ENCODE measurements at regions of chr7 and their contacts with region 1.

Region 1: DNA sequence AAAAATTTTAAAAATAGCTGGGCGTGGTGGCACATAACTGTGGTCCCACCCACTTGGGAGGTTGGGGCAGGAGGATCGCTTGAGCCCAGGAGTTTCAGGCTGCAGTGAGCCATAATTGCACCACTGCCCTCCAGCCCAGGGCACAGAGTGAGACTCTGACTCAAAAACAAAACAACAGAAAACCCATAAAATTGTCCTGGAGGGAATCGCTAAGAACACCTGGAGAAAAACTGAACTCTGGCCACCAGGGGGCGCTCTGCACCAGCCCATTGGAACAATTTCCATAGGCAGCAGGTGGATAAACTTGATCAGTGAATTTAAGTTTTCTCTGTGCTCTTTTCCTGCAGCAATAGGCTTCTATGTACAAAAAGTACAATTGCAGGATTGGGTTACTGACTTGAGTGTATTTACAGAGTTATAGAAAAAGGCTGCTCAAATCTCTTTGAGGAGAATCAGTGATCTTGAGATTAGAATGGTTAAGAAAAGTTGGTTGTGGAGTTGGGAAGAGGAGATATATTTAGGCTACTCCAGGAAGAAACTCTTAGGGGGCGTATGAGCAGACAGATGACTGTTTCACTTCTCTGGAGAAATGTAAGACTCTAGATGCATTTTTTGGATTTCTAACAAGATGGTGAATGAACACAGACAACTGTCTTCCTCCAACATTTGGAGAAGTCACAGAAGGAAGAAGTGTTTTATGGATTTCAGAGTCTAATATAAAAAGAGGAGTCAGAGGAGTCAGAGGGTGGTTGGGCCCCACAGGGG is 274.9 kb upstream of the GALNT17 start:
- DNase-seq: peak; percentile 89

Region 2: DNA sequence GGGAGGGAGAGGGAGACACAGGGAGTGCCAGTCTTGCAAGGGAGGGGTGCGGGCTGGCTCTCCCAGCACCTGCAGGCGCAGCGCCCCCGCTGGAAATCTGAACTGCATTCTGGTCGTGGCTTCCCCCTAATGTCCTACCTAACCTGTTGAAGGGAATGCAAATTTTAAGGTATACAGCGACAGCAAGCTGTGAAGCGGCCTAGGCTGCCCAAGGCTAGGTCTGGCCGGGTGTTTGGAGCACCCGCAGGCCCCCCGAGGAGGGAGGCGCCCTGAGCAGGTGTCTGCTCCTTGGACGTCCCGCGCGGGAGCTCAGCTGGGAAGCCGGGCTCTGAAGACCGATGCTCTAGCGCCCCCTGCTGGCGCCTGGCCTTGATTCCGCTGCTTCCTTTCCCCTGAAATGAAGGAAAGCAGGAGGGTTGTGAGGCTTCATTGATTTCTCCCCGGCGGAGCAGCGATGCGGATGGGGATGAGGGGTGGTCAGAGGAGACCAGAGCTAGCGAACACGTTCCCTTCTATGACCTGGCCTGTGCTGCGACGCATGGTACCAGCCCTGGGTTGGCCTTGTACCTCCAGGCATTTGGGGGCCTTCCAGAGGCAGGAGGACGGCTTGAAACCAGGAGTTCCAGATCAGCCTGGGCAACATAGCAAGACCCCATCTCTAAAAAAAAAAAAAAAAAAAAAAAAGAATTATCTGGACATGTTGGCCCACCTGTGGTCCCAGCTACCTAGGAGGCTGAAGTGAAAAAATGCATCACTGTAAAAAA is 876.2 kb after region 1 on chr7:
- intact Hi-C with region 1: loop called (anchors 2 to 5 kb)
- DNase-seq: peak; percentile 95